ENCODE measurements at regions of chr1 and their contacts with region 1.

Region 1: DNA sequence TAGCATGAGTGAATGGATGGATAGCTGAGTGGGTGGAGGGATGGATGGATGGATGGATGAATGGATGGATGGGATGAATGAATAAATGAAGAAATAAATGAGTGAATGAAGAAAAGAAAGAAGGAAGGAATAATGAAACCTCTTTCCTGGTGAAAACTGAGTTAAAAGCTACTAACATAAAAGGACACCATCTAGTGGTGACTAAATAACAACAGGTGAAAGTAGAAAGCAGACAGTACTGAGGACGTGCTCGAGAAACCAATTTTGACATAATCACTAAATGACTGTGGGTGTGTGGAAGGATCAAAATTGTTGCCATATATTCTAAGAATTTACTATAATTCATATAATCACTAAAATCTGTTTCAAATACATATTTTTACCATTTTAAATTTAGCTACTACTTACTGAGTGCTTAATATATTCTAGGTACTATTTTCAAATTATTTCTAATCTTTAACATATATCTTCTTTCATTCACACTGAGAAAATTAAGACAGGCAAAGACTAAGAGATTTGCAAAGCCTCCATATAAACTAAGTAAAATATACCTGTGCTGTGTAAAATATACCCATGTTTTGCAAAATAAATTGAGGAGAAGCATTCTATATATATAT is 522.9 kb downstream of the LRRIQ3 start:
- DNase-seq: peak; percentile 34
- H3K4me3 Mint-ChIP-seq: no peak overlapping the region
- H3K27ac Mint-ChIP-seq: no peak overlapping the region
- H3K4me1 Mint-ChIP-seq: no peaks in the 10 kb centered on the region
- H3K27me3 Mint-ChIP-seq: no peaks in the 10 kb centered on the region
- CTCF ChIP-seq: peak; percentile 55

Region 2: GRCh38 chr1:72623299-72623708 is 1051.7 kb before region 1 on chr1:
- CTCF ChIA-PET with region 1: interaction called, 13 read pairs
- POLR2A ChIA-PET with region 1: no interaction called
- intact Hi-C with region 1: loop called (anchors 1 kb)
- DNase-seq: peak; percentile 67
- H3K4me3 Mint-ChIP-seq: peak overlapping the region; percentile 24
- H3K27ac Mint-ChIP-seq: no peak overlapping the region
- H3K4me1 Mint-ChIP-seq: peaks cover 6% of the 10 kb centered on the region
- H3K27me3 Mint-ChIP-seq: peaks cover 21% of the 10 kb centered on the region
- CTCF ChIP-seq: peak; percentile 48

Region 3: GRCh38 chr1:73452522-73452921 is 222.5 kb before region 1 on chr1:
- CTCF ChIA-PET with region 1: interaction called, 6 read pairs
- POLR2A ChIA-PET with region 1: no interaction called
- intact Hi-C with region 1: loop called (anchors 2 kb)
- DNase-seq: no peak
- H3K4me3 Mint-ChIP-seq: no peak overlapping the region
- H3K27ac Mint-ChIP-seq: no peak overlapping the region
- H3K4me1 Mint-ChIP-seq: no peaks in the 10 kb centered on the region
- H3K27me3 Mint-ChIP-seq: no peaks in the 10 kb centered on the region
- CTCF ChIP-seq: no peak

Region 4: GRCh38 chr1:73635021-73635420 is 40.0 kb before region 1 on chr1:
- CTCF ChIA-PET with region 1: no interaction called
- POLR2A ChIA-PET with region 1: no interaction called
- intact Hi-C with region 1: no loop called
- DNase-seq: peak; percentile 17
- H3K4me3 Mint-ChIP-seq: no peak overlapping the region
- H3K27ac Mint-ChIP-seq: no peak overlapping the region
- H3K4me1 Mint-ChIP-seq: no peaks in the 10 kb centered on the region
- H3K27me3 Mint-ChIP-seq: no peaks in the 10 kb centered on the region
- CTCF ChIP-seq: no peak

Region 5: DNA sequence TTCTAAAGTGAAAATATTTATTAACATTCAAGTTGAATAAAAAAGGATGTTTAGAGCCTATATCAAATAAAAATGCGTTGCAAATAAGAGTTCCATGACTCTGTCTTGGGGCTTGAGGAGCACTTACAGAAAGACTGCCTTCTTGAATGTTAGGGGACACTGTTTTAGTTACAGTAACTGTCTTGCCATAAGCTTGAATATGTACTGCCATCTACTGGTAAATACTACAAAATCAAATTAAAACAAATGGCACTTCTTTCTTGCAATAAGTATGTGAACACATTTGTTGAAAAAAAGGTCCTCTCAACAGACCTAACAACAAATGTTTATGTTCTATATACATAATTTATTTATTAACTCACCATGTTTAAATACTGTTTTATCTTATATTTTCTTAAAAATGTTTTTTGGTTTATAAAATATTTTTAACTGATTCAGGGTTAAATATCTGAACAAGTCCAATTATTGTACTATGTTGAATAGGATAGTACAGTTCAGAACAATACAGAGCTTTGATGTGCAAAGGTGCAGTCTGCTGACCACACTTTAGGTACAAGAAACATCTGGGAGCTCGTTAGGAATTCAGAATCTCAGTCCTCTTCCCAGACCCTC is 323.4 kb after region 1 on chr1:
- CTCF ChIA-PET with region 1: no interaction called
- POLR2A ChIA-PET with region 1: no interaction called
- intact Hi-C with region 1: loop called (anchors 10 kb)
- DNase-seq: peak; percentile 40
- H3K4me3 Mint-ChIP-seq: no peak overlapping the region
- H3K27ac Mint-ChIP-seq: no peak overlapping the region
- H3K4me1 Mint-ChIP-seq: no peaks in the 10 kb centered on the region
- H3K27me3 Mint-ChIP-seq: no peaks in the 10 kb centered on the region
- CTCF ChIP-seq: peak; percentile 36